Activated CD4-positive, alpha-beta memory T cell treated with anti-CD3 and anti-CD28 coated beads, Interleukin-2, amount 10 ng/mL, durations not matched to agents 7 days and 5 days (primary cell): ENCODE measurements at regions of chr11 and their contacts with region 1.

Region 1: GRCh38 chr11:66842896-66843775 is at the start of gene RCE1:
- DNase-seq: peak; percentile 93
- H3K4me3 Mint-ChIP-seq: peak within 1 kb of the TSS; percentile 93
- H3K27ac Mint-ChIP-seq: peak within 1 kb of the TSS; percentile 93
- H3K4me1 Mint-ChIP-seq: peaks cover 58% of the 10 kb centered on the region
- H3K27me3 Mint-ChIP-seq: no peaks in the 10 kb centered on the region
- total RNA-seq, gene RCE1: 21.2 to 22.0 TPM

Region 2: DNA sequence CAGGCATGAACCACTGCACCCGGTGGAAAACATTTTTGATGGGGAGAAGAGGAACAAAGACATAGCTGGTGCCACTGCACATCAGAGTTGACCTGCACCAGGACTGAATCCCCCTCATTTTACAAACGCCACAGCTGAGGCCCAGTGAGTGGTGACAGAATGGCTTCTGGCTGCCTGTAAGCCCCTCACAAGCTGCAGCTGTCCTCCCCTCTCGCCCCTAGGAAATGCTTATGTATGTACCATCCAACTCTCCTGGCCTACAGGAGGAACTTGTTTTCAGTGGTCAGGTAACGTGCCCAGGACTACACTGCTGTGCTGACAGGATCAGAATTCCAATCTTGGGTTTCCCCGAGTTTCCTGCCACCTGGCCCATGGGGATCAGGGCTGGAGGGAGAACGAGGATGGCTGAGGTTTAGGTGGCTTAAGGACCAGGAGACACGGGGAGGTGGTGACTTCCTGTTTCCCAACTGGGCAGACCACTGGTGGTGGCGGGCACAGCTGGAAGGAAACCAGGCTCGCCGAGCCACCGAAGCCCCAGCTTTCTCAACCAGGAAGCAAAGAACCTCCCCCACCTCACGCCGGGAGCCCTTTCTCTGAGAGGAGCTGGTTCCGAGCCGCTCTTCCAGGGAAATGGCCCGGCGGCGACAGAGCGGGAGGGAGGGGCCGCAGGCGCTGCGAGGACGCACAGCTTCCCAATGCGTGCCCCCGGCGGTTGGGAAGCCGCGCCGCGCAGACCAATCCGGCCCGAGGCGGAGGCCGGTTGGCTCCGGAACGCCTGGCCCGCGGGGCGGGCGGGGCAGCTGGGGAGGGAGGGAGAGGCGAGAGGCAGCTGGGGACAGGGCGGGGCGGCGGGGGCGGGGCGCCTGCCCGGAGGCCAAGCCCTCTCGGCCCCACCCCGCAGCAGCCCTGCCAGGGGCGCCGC is 12.7 kb after region 1 on chr11:
- CTCF ChIA-PET with region 1: interaction called, 21 read pairs
- POLR2A ChIA-PET with region 1: interaction called, 177 read pairs
- DNase-seq: peak; percentile 92
- H3K4me3 Mint-ChIP-seq: peak overlapping the region; percentile 86
- H3K27ac Mint-ChIP-seq: peak overlapping the region; percentile 85
- H3K4me1 Mint-ChIP-seq: peaks cover 32% of the 10 kb centered on the region
- H3K27me3 Mint-ChIP-seq: no peaks in the 10 kb centered on the region

Region 3: GRCh38 chr11:66880496-66881455 is 37.6 kb after region 1 on chr11:
- CTCF ChIA-PET with region 1: interaction called, 3 read pairs
- POLR2A ChIA-PET with region 1: interaction called, 14 read pairs
- DNase-seq: no peak
- H3K4me3 Mint-ChIP-seq: no peak overlapping the region
- H3K27ac Mint-ChIP-seq: no peak overlapping the region
- H3K4me1 Mint-ChIP-seq: peaks cover 13% of the 10 kb centered on the region
- H3K27me3 Mint-ChIP-seq: no peaks in the 10 kb centered on the region